ENCODE measurements at regions of chr17 and their contacts with region 1.

Region 1: DNA sequence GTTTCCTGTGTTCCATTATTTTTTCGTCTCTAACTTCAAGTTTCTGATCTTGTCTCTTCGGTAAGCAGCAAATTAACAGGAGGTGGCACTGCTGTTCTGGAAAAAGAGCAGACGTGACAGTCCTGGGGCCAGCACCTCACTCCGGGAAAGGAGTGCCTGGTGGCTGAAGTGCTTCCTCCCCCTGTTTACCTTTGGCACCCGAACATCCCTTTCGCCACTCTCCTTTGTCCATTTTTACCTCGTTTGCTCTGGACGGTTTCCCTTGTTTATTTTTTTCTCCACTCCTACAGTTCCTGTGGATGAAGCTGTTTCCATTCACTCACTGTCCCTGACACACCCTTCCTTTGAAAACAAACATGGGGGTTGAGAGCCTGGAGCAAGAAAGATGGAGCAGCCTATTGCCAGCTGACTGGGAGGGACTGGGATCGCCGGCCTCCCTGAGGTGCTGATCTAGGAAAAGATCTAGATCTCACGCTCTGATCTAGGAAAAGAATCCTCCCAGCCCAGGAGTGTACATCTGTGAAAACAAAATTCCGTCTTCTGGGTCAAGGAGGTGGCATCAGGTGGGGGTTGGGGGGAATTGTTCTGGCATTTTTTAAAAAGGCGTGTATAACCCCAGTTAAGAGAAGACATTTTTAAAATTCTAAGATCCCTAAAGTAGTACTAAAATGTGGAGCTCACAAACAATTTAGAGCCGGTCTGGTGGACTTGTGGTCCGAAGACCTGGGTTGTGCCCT is 12.7 kb downstream of the SAP30BP start:
- DNase-seq: no peak
- CTCF ChIP-seq: no peak

Region 2: DNA sequence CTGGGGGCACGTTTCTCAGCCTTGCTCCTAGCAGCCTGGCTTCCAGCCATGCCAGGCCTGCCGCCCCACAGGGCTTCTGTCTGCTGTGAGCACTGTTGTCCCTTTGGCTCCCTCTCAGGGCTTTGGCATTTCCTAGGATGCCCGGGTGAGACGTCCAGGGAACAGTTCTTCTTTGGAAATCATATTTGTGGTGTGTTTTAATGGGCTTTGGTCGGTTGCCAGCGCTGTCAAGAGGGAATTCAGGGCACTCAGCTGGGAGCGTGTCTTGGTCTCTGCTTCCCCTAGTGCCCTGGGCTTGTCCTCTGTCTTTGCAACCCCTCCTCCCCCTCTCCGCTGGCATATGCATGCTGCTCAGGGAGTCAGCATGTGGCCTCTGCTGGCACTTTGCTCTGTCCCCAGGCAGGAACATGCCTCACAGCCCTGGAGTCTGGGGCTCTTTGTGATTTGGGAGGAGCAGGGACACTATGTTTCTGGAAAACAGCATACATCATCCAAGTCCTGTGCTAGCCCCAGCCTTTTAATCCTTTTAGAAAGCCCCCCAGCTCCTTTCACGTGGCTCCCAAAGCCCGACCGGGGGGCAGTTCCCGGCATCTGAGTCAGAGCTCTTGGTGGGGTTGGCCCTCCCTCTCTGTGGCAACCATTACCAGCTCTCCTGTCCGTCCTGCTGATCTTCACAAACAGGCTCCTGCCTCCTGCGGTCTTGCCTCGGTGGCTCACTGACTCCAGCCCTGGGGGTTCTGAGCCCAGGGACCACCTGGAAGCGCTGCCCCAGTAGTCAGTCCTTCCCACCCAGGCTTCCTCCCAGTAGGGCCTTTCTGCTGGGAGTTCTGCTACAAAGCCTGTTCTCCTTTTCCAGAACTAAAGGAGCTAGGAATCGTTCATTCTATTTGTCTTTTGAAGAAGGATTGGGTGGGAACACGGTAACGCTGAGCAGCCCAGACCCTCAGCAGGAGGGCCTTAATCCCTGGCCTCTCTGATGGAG is 13.9 kb after region 1 on chr17:
- CTCF ChIA-PET with region 1: interaction called, 140 read pairs
- POLR2A ChIA-PET with region 1: no interaction called
- DNase-seq: no peak
- CTCF ChIP-seq: no peak